ENCODE measurements at regions of chr4 and their contacts with region 1.

Region 1: DNA sequence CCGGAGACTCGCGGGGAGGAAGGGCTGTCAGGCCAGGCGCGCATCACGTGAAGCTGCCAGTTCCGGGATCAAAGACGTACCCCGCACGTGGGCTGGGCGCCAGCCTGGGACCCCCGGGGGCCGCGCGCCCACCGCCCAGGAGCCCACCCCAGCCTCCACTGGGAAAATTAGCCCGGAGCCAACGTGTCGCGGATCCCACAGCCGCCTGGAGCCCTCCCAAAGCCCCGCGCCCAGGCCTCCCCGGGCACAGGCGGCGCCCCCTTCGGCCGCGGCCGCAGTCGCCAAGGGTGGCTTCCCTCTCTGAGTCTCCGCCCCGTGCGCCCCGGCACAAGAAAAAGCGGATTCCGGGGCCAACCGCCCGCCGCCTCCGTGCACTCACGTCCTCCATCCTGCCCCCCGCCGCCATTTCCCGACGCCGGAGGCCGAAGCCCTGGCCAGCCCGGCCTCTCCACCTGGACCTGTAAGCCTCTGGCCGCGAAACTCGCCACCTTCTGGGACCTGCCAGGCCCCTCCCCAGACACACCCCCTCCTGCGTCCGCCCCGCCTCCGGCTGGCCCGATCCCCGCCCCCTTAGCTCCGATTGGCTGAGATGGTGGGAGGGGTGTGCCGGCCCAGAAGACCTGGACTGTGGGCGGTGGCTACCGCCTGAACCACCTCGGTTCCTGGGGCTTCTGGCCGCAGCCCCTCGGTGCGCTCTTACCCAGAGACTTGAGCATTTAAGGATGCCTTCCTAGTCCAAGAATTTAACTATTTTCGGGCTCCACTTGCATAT is at the start of gene TMEM192:
- DNase-seq: peak; percentile 96
- ATAC-seq: peak; percentile 96
- H3K4me3 Mint-ChIP-seq: peak within 1 kb of the TSS; percentile 97
- H3K27ac Mint-ChIP-seq: peak within 1 kb of the TSS; percentile 96
- H3K4me1 Mint-ChIP-seq: peaks cover 24% of the 10 kb centered on the region
- H3K27me3 Mint-ChIP-seq: peaks cover 3% of the 10 kb centered on the region
- CTCF ChIP-seq: peak; percentile 15
- total RNA-seq, gene TMEM192: 17.0 and 19.3 TPM in 2 replicates

Region 2: DNA sequence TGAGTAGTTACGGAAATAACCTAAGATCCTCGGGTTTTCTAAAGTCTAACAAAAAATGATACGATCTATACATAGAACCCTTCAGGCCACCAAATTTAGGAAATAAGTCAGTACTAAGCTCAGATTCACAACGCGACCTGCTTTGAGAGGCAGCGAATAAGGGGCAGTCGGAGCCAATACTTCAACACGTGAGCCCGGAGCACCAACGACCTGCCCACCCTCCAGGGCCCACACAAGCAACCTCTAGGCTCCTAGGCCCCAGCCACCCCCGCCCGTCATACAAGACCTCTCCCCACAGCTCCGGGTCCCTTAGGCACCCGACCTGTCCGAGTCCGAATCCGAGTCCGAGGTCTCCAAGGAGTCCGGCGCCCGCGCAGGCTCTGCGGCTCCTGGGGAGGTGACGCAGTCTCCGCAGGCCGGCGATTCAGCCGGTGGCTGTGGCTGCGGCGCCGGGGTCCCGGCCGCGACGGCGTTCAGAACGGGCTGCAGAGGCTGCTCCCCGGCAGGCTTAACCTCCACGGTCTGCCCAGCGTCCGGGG is 1946.4 kb before region 1 on chr4:
- CTCF ChIA-PET with region 1: no interaction called
- POLR2A ChIA-PET with region 1: no interaction called
- intact Hi-C with region 1: loop called (anchors 1 kb)
- DNase-seq: peak; percentile 63
- ATAC-seq: peak; percentile 64
- H3K4me3 Mint-ChIP-seq: peak overlapping the region; percentile 91
- H3K27ac Mint-ChIP-seq: peak overlapping the region; percentile 95
- H3K4me1 Mint-ChIP-seq: peaks cover 27% of the 10 kb centered on the region
- H3K27me3 Mint-ChIP-seq: no peaks in the 10 kb centered on the region
- CTCF ChIP-seq: no peak

Region 3: DNA sequence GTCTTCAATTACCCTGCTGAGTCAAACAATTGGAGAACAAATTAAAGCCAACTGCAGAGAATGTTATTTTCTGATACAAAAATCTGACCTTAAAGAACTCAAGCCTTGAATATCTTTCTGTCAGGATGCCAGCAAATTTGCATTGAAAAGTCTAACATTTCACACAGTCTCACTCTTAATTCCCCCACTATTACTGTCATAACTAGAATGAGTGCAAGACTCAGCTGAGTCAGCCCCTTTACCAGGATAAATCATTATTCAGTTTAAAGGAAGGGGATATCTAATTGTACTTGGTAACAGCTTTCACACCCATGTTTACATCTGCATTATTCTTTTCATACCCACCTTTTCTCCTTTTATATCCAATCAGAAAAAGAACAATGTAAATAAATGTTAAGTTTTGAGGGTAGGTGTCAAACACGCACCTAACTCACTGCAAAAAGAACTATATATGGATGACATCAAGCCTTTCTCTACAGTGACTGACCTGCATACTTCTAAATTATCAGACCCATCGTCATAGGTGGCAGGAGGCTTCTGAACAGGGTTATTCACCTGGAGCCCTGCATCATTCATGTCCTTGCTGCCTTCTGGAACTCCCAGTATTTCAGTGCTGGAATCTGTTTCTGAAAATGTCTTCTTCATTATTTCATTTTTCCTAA is 1500.6 kb before region 1 on chr4:
- CTCF ChIA-PET with region 1: no interaction called
- POLR2A ChIA-PET with region 1: no interaction called
- intact Hi-C with region 1: loop called (anchors 5 kb)
- DNase-seq: no peak
- ATAC-seq: peak; percentile 38
- H3K4me3 Mint-ChIP-seq: peak overlapping the region; percentile 89
- H3K27ac Mint-ChIP-seq: peak overlapping the region; percentile 98
- H3K4me1 Mint-ChIP-seq: peaks cover 74% of the 10 kb centered on the region
- H3K27me3 Mint-ChIP-seq: no peaks in the 10 kb centered on the region
- CTCF ChIP-seq: no peak

Region 4: GRCh38 chr4:164956766-164957643 is 155.5 kb before region 1 on chr4:
- CTCF ChIA-PET with region 1: no interaction called
- POLR2A ChIA-PET with region 1: no interaction called
- intact Hi-C with region 1: loop called (anchors 1 kb)
- DNase-seq: peak; percentile 66
- ATAC-seq: peak; percentile 100
- H3K4me3 Mint-ChIP-seq: peak overlapping the region; percentile 90
- H3K27ac Mint-ChIP-seq: peak overlapping the region; percentile 68
- H3K4me1 Mint-ChIP-seq: peaks cover 21% of the 10 kb centered on the region
- H3K27me3 Mint-ChIP-seq: peaks cover 12% of the 10 kb centered on the region
- CTCF ChIP-seq: no peak

Region 5: GRCh38 chr4:165096776-165097175 is 15.8 kb before region 1 on chr4:
- CTCF ChIA-PET with region 1: no interaction called
- POLR2A ChIA-PET with region 1: no interaction called
- intact Hi-C with region 1: loop called (anchors 2 kb)
- DNase-seq: no peak
- ATAC-seq: peak; percentile 31
- H3K4me3 Mint-ChIP-seq: no peak overlapping the region
- H3K27ac Mint-ChIP-seq: no peak overlapping the region
- H3K4me1 Mint-ChIP-seq: no peaks in the 10 kb centered on the region
- H3K27me3 Mint-ChIP-seq: no peaks in the 10 kb centered on the region
- CTCF ChIP-seq: no peak

Region 6: GRCh38 chr4:165207431-165208220 is 95.1 kb after region 1 on chr4 and contains the start of gene KLHL2:
- CTCF ChIA-PET with region 1: interaction called, 3 read pairs
- POLR2A ChIA-PET with region 1: interaction called, 4 read pairs
- intact Hi-C with region 1: loop called (anchors 1 kb)
- DNase-seq: peak; percentile 76
- ATAC-seq: peak; percentile 90
- H3K4me3 Mint-ChIP-seq: peak within 1 kb of the TSS; percentile 94
- H3K27ac Mint-ChIP-seq: peak within 1 kb of the TSS; percentile 91
- H3K4me1 Mint-ChIP-seq: peaks cover 73% of the 10 kb centered on the region
- H3K27me3 Mint-ChIP-seq: no peaks in the 10 kb centered on the region
- CTCF ChIP-seq: no peak
- total RNA-seq, gene KLHL2: 21.5 and 21.9 TPM in 2 replicates

Region 7: GRCh38 chr4:165343353-165344191 is 231.0 kb after region 1 on chr4:
- CTCF ChIA-PET with region 1: interaction called, 13 read pairs
- POLR2A ChIA-PET with region 1: no interaction called
- intact Hi-C with region 1: loop called (anchors 1 kb)
- DNase-seq: no peak
- ATAC-seq: no peak
- H3K4me3 Mint-ChIP-seq: no peak overlapping the region
- H3K27ac Mint-ChIP-seq: no peak overlapping the region
- H3K4me1 Mint-ChIP-seq: no peaks in the 10 kb centered on the region
- H3K27me3 Mint-ChIP-seq: no peaks in the 10 kb centered on the region
- CTCF ChIP-seq: no peak

Measured in activated B cell treated with CpG ODN at 0.5 μM for 24 hours (primary cell).